Naive thymus-derived CD4-positive, alpha-beta T cell (primary cell): ENCODE measurements at regions of chrX and their contacts with region 1.

Region 1: DNA sequence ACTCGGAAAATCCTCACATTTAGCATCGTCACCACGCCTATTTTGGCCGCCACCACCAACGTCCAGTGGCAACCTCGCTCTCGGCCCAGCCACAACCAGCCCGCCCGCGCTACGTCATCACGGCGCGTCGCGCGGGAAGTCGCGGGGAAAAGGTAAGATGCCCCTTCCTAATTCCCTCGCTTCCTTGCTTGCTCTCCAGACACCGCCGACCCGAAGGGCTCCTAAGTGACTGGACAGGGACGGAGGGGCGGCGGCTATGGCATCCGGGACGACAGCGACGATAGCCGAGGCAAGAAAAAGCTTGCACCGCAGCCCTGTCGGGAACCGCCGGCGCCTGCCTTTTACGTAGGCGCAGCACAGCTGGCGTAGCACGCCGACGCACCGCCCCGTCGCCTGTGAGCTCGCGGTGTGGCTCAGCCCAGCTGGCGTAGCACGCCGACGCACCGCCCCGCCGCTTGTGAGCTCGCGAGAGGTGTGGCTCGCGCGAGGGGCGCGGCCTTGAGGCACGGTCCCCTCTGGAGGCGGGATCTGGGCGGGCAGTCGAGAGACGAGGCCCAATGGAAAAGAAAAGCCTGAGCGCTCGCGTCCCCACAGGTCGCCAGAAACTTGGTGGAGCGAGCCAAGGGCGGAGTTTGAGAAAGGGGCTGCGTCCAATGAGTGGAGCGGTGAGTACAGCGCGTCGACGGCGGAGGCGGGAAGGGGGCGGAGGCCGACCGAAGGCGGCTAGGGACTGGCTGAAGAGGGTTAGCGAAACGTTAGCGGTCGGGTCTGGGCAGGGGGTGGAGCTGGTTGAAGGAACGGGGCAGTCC is at the start of gene HDAC6:
- DNase-seq: peak; percentile 76 to 98 (median 95)
- ATAC-seq: peak; percentile 91
- H3K4me3 ChIP-seq: peak within 1 kb of the TSS; percentile 84
- H3K4me3 Mint-ChIP-seq: peak within 1 kb of the TSS; percentile 91 to 98 (median 96)
- H3K27ac ChIP-seq: peak within 1 kb of the TSS; percentile 97
- H3K27ac Mint-ChIP-seq: peak within 1 kb of the TSS; percentile 96 to 99 (median 98)
- H3K4me1 ChIP-seq: peaks cover 6 to 12% of the 10 kb centered on the region in 2 donors
- H3K4me1 Mint-ChIP-seq: peaks cover 10 to 27% (median 16%) of the 10 kb centered on the region in 7 donors
- H3K27me3 ChIP-seq: no peaks in the 10 kb centered on the region
- H3K27me3 Mint-ChIP-seq: no peaks in the 10 kb centered on the region
- total RNA-seq, gene HDAC6: 84.3 to 135 (median 96.1) TPM

Region 2: GRCh38 chrX:47836164-47837072 is 965.1 kb before region 1 on chrX and contains the start of gene ZNF81:
- CTCF ChIA-PET with region 1: no interaction called
- POLR2A ChIA-PET with region 1: no interaction called
- intact Hi-C with region 1: loop called in 1 of 2 experiments (anchors 5 kb)
- DNase-seq: peak; percentile 73 to 91 (median 83)
- ATAC-seq: peak; percentile 96
- H3K4me3 ChIP-seq: peak within 1 kb of the TSS; percentile 67
- H3K4me3 Mint-ChIP-seq: peak within 1 kb of the TSS; percentile 96 to 99 (median 98)
- H3K27ac ChIP-seq: peak within 1 kb of the TSS; percentile 79
- H3K27ac Mint-ChIP-seq: peak within 1 kb of the TSS; percentile 94 to 99 (median 97)
- H3K4me1 ChIP-seq: peaks cover 4 to 6% of the 10 kb centered on the region in 2 donors
- H3K4me1 Mint-ChIP-seq: peaks cover 1 to 36% (median 26%) of the 10 kb centered on the region in 7 donors
- H3K27me3 ChIP-seq: no peaks in the 10 kb centered on the region
- H3K27me3 Mint-ChIP-seq: no peaks in the 10 kb centered on the region
- total RNA-seq, gene ZNF81: 11.0 to 14.7 (median 11.7) TPM

Region 3: GRCh38 chrX:48278958-48279357 is 522.5 kb before region 1 on chrX:
- CTCF ChIA-PET with region 1: no interaction called
- POLR2A ChIA-PET with region 1: no interaction called
- intact Hi-C with region 1: no loop called
- DNase-seq: no peak
- ATAC-seq: no peak
- H3K4me3 ChIP-seq: no peak overlapping the region
- H3K4me3 Mint-ChIP-seq: no peak overlapping the region
- H3K27ac ChIP-seq: no peak overlapping the region
- H3K27ac Mint-ChIP-seq: no peak overlapping the region
- H3K4me1 ChIP-seq: no peaks in the 10 kb centered on the region
- H3K4me1 Mint-ChIP-seq: peaks cover 0 to 1% (median 0%) of the 10 kb centered on the region in 7 donors
- H3K27me3 ChIP-seq: no peaks in the 10 kb centered on the region
- H3K27me3 Mint-ChIP-seq: no peaks in the 10 kb centered on the region

Region 4: GRCh38 chrX:48597353-48598264 is 203.9 kb before region 1 on chrX and contains the start of gene WDR13:
- CTCF ChIA-PET with region 1: no interaction called
- POLR2A ChIA-PET with region 1: interaction called, 4 read pairs
- intact Hi-C with region 1: loop called (anchors 1 kb)
- DNase-seq: peak; percentile 77 to 93 (median 91)
- ATAC-seq: peak; percentile 93
- H3K4me3 ChIP-seq: peak within 1 kb of the TSS; percentile 98
- H3K4me3 Mint-ChIP-seq: peak within 1 kb of the TSS; percentile 81 to 99 (median 96)
- H3K27ac ChIP-seq: peak within 1 kb of the TSS; percentile 94
- H3K27ac Mint-ChIP-seq: peak within 1 kb of the TSS; percentile 98 to 100 (median 99)
- H3K4me1 ChIP-seq: peaks cover 0 to 8% of the 10 kb centered on the region in 2 donors
- H3K4me1 Mint-ChIP-seq: peaks cover 4 to 16% (median 11%) of the 10 kb centered on the region in 7 donors
- H3K27me3 ChIP-seq: no peaks in the 10 kb centered on the region
- H3K27me3 Mint-ChIP-seq: peaks cover 0 to 2% (median 0%) of the 10 kb centered on the region in 5 donors
- total RNA-seq, gene WDR13: 44.8 to 66.9 (median 54.4) TPM

Region 5: DNA sequence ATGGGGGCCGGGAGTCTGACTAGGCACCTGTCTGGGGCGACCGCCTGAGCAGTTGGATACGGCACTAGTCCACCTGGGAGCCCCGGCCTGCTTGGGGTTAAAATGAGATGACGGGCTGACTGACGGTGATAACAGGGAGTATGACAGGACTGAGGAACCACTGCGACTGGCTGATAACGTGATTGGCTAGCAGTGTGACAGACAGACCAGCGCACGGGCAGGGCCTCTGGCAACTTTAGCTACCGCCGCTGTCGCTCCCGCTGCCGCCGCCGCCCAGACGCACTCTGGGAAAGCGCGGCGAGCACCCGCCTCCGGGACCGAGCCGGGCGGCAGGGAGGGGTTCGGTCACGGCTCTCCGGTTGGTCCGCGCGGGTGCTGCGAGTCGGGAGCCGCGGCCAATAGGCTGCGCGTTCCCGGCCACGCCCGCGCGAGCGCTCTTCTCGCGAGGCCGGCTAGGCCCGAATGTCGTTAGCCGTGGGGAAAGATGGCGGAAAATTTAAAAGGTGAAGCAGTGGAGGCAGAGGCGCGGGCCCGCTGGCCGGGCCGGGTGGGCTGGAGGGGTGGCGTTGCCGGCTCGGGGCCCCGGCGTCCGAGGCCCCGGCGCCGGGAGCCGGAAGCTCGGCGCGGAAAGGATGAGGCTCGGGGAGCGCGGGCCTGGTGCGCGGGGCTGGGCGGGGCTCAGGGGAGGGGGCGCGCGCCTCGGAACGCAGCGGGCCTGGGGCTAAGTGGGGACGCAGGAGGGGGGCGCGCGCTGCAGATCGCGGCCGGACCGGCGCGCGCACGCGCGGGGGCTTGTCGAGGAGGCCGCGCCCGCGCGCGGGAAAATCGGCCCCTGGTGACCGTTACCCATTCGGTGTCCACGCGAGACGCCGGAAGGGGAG is 104.9 kb before region 1 on chrX and contains the start of gene SUV39H1:
- CTCF ChIA-PET with region 1: no interaction called
- POLR2A ChIA-PET with region 1: interaction called, 14 read pairs
- intact Hi-C with region 1: loop called (anchors 1 kb)
- DNase-seq: peak; percentile 76 to 90 (median 85)
- ATAC-seq: peak; percentile 97
- H3K4me3 ChIP-seq: peak within 1 kb of the TSS; percentile 62
- H3K4me3 Mint-ChIP-seq: peak within 1 kb of the TSS; percentile 86 to 95 (median 90)
- H3K27ac ChIP-seq: peak within 1 kb of the TSS; percentile 82
- H3K27ac Mint-ChIP-seq: peak within 1 kb of the TSS; percentile 91 to 96 (median 95)
- H3K4me1 ChIP-seq: peaks cover 0 to 13% of the 10 kb centered on the region in 2 donors
- H3K4me1 Mint-ChIP-seq: peaks cover 6 to 39% (median 28%) of the 10 kb centered on the region in 7 donors
- H3K27me3 ChIP-seq: no peaks in the 10 kb centered on the region
- H3K27me3 Mint-ChIP-seq: no peaks in the 10 kb centered on the region
- total RNA-seq, gene SUV39H1: 4.6 to 23.3 (median 8.6) TPM

Region 6: GRCh38 chrX:48891402-48892288 is 90.2 kb after region 1 on chrX:
- CTCF ChIA-PET with region 1: no interaction called
- POLR2A ChIA-PET with region 1: interaction called, 3 read pairs
- intact Hi-C with region 1: loop called (anchors 1 kb)
- DNase-seq: peak; percentile 61 to 79 (median 75)
- ATAC-seq: peak; percentile 94
- H3K4me3 ChIP-seq: peak overlapping the region; percentile 53
- H3K4me3 Mint-ChIP-seq: peak overlapping the region; percentile 70 to 98 (median 86)
- H3K27ac ChIP-seq: peak overlapping the region; percentile 81
- H3K27ac Mint-ChIP-seq: peak overlapping the region in 8 of 9 donors; percentile 14 to 82 (median 64)
- H3K4me1 ChIP-seq: peaks cover 7 to 8% of the 10 kb centered on the region in 2 donors
- H3K4me1 Mint-ChIP-seq: peaks cover 12 to 31% (median 20%) of the 10 kb centered on the region in 7 donors
- H3K27me3 ChIP-seq: no peaks in the 10 kb centered on the region
- H3K27me3 Mint-ChIP-seq: no peaks in the 10 kb centered on the region

Region 7: GRCh38 chrX:48945516-48946348 is 144.2 kb after region 1 on chrX:
- CTCF ChIA-PET with region 1: no interaction called
- POLR2A ChIA-PET with region 1: no interaction called
- intact Hi-C with region 1: no loop called
- DNase-seq: peak; percentile 30 to 69 (median 46)
- ATAC-seq: peak; percentile 74
- H3K4me3 ChIP-seq: no peak overlapping the region
- H3K4me3 Mint-ChIP-seq: peak overlapping the region; percentile 25 to 61 (median 50)
- H3K27ac ChIP-seq: peak overlapping the region; percentile 22
- H3K27ac Mint-ChIP-seq: peak overlapping the region; percentile 44 to 88 (median 71)
- H3K4me1 ChIP-seq: peaks cover 23 to 25% of the 10 kb centered on the region in 2 donors
- H3K4me1 Mint-ChIP-seq: peaks cover 20 to 59% (median 48%) of the 10 kb centered on the region in 7 donors
- H3K27me3 ChIP-seq: no peaks in the 10 kb centered on the region
- H3K27me3 Mint-ChIP-seq: no peaks in the 10 kb centered on the region

Region 8: DNA sequence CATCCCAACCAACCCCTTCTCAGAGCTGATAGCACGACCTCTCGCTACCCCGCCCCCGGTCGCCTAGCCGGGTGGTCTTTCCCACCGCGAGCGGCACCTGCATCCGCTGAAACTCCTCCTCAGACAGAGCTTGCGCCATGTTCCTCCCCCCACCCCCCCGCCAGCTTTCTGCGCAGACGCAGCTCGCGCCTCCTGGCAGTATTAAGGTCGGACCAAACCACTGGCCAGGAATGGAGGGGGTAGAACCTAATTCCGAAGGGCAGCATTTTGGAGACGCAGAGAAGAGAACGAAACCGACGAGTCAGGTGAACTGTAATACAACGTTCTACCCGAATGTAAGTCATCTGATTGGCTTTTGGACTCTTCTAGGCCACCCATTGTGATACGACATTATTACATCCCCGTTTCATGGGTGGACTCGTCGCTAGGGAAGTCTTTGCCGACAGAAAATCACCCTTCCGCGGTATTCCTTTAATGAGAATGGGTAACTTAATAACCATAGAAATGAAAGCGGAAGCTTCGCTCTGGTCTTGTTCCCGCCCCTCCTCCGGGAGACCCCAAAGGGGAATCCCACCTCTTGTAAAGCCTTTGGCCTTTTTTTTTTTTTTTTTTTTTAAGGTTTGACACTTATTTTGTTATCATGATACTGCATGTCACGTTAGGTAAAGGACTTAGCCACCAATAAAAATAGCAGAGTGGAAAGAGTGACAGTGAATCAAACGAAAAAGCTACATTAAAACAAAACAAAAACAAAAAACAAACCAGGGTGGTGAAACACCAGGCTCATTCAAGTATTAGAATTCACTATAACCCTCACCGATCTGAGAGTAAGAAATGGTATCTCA is 200.8 kb after region 1 on chrX and contains the start of gene GRIPAP1:
- CTCF ChIA-PET with region 1: no interaction called
- POLR2A ChIA-PET with region 1: no interaction called
- intact Hi-C with region 1: loop called (anchors 1 kb)
- DNase-seq: peak; percentile 61 to 87 (median 79)
- ATAC-seq: peak; percentile 88
- H3K4me3 ChIP-seq: peak within 1 kb of the TSS; percentile 97
- H3K4me3 Mint-ChIP-seq: peak within 1 kb of the TSS; percentile 94 to 99 (median 98)
- H3K27ac ChIP-seq: peak within 1 kb of the TSS; percentile 97
- H3K27ac Mint-ChIP-seq: peak within 1 kb of the TSS; percentile 92 to 100 (median 98)
- H3K4me1 ChIP-seq: peaks cover 9 to 10% of the 10 kb centered on the region in 2 donors
- H3K4me1 Mint-ChIP-seq: peaks cover 7 to 43% (median 32%) of the 10 kb centered on the region in 7 donors
- H3K27me3 ChIP-seq: no peaks in the 10 kb centered on the region
- H3K27me3 Mint-ChIP-seq: no peaks in the 10 kb centered on the region
- total RNA-seq, gene GRIPAP1: 103 to 108 (median 105) TPM